ENCODE measurements at regions of chr13 and their contacts with region 1.

Region 1: GRCh38 chr13:110306960-110307746 is at the starts of genes COL4A1 and COL4A2:
- DNase-seq: peak; percentile 77
- H3K4me3 Mint-ChIP-seq: peak within 1 kb of the TSS; percentile 90
- H3K27ac Mint-ChIP-seq: peak within 1 kb of the TSS; percentile 5
- H3K4me1 Mint-ChIP-seq: peaks cover 32% of the 10 kb centered on the region
- H3K27me3 Mint-ChIP-seq: no peaks in the 10 kb centered on the region
- CTCF ChIP-seq: no peak
- total RNA-seq, gene COL4A1: 25.9 and 42.1 TPM in 2 replicates
- total RNA-seq, gene COL4A2: 54.6 and 66.0 TPM in 2 replicates

Region 2: DNA sequence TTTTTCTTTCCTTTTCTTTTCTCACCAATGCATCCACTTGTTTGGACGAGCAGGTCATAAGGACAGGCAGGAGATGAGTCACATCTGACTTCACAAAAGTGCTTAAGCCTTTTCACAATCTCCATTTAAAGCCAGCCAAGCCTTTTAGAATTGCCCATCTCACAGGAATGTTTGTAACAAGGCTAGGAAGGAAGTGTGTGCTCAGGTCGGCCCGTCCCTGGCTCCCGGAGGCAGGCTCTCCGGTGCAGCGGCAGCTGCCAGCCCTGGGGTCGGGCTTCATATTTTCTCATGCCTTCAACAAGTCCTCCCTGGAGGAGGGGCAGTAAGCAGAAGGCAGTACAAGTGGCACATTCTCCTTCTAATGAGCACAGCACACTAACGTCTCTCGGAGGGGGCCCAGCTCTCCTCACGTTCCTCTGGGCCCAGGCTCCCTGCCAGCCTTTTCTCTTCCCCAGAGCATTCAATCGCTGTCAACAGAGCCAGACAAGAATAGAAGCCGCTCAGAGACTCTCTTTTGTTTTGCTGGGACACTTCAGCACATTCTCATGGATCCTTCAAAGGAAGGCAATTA is 180.7 kb before region 1 on chr13:
- CTCF ChIA-PET with region 1: no interaction called
- POLR2A ChIA-PET with region 1: no interaction called
- intact Hi-C with region 1: no loop called
- DNase-seq: peak; percentile 97
- H3K4me3 Mint-ChIP-seq: peak overlapping the region; percentile 32
- H3K27ac Mint-ChIP-seq: peak overlapping the region; percentile 73
- H3K4me1 Mint-ChIP-seq: peaks cover 29% of the 10 kb centered on the region
- H3K27me3 Mint-ChIP-seq: no peaks in the 10 kb centered on the region
- CTCF ChIP-seq: no peak

Region 3: DNA sequence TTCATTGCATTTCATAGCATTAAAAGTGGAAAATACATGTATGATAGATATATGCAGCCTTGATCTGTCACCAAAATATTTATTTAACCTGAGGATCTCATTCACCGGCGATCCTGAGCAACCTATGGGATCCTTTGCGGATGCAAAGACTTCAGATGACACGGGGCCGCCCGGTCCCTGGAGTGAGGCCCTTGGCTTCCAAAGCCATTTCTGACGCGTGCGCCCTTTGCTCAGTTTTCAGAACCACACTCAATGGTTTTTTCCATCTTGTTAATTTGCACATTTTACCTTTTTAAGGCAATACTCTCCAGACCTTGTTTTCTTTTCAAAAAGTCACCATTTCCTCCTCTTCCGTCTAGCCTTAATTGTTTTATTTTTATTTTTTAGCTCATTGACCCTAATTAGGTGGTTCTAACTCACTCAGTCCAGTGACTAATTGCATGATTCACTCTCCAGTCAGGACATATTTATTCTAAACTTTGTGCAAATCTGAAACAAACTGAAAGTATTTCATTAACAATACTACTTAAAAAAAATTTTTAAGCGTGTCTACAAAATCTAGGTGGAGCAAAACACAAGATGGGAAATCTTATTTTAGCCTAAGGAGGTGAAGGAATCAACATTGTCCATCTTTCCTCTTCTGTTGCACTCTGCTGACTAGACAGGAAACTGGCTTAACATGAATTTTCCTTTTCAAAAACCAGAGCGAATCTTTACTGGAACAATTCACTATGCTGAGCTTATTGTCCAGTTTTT is 48.1 kb before region 1 on chr13:
- CTCF ChIA-PET with region 1: interaction called, 3 read pairs
- POLR2A ChIA-PET with region 1: interaction called, 3 read pairs
- intact Hi-C with region 1: loop called (anchors 5 kb)
- DNase-seq: peak; percentile 28
- H3K4me3 Mint-ChIP-seq: peak overlapping the region; percentile 39
- H3K27ac Mint-ChIP-seq: peak overlapping the region; percentile 84
- H3K4me1 Mint-ChIP-seq: peaks cover 30% of the 10 kb centered on the region
- H3K27me3 Mint-ChIP-seq: no peaks in the 10 kb centered on the region
- CTCF ChIP-seq: no peak

Region 4: DNA sequence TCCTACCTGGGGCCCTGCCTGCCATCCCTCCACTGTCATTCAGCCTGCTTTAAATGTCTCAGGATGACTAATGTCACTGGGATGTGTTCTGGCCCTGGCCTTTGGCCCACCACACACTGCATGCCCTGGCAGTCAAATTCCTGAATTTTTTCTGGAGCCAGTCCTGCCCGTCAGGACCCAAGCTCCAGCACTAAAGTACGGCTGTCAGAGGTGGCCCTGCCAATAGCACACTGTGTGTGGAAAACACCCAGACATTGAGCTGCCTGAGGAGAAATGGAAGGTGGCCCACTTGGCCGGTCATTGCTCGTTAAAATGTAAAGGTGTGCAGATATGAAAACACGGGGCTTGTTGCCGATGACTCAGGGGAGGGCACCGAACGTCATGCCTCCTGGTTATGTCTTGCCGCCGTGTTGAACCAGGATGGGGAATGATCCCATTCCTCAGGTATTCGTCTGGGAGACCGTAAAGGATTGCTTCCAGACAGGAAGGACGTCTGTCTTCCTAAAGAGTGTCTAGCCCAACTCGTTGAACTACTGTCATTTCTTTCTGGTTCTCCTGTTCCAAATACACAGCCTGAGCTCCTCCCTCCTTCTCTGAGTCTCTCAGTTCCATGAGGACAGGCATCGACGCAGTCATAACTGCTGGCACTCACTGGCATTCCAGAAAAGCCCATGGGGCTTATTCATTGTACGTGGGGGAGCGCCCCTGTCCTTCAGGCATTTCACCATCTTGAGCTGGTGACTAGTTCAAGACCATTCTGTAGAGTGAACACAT is 40.6 kb after region 1 on chr13:
- CTCF ChIA-PET with region 1: interaction called, 3 read pairs
- POLR2A ChIA-PET with region 1: interaction called, 22 read pairs
- intact Hi-C with region 1: loop called (anchors 2 kb)
- DNase-seq: peak; percentile 92
- H3K4me3 Mint-ChIP-seq: peak overlapping the region; percentile 72
- H3K27ac Mint-ChIP-seq: peak overlapping the region; percentile 95
- H3K4me1 Mint-ChIP-seq: peaks cover 62% of the 10 kb centered on the region
- H3K27me3 Mint-ChIP-seq: no peaks in the 10 kb centered on the region
- CTCF ChIP-seq: no peak

Region 5: GRCh38 chr13:110485603-110486002 is 178.4 kb after region 1 on chr13:
- CTCF ChIA-PET with region 1: no interaction called
- POLR2A ChIA-PET with region 1: no interaction called
- intact Hi-C with region 1: no loop called
- DNase-seq: no peak
- H3K4me3 Mint-ChIP-seq: no peak overlapping the region
- H3K27ac Mint-ChIP-seq: no peak overlapping the region
- H3K4me1 Mint-ChIP-seq: no peaks in the 10 kb centered on the region
- H3K27me3 Mint-ChIP-seq: no peaks in the 10 kb centered on the region
- CTCF ChIP-seq: no peak

Region 6: GRCh38 chr13:110644892-110645521 is 337.9 kb after region 1 on chr13:
- CTCF ChIA-PET with region 1: no interaction called
- POLR2A ChIA-PET with region 1: no interaction called
- intact Hi-C with region 1: no loop called
- DNase-seq: no peak
- H3K4me3 Mint-ChIP-seq: no peak overlapping the region
- H3K27ac Mint-ChIP-seq: no peak overlapping the region
- H3K4me1 Mint-ChIP-seq: no peaks in the 10 kb centered on the region
- H3K27me3 Mint-ChIP-seq: no peaks in the 10 kb centered on the region
- CTCF ChIP-seq: no peak